ENCODE measurements at regions of chr9 and their contacts with region 1.

Region 1: GRCh38 chr9:114844766-114845165 is 38.9 kb upstream of the TNFSF15 start:
- DNase-seq: no peak
- ATAC-seq: no peak
- H3K4me3 ChIP-seq: no peak overlapping the region
- H3K4me3 Mint-ChIP-seq: no peak overlapping the region
- H3K27ac ChIP-seq: no peak overlapping the region
- H3K27ac Mint-ChIP-seq: no peak overlapping the region
- H3K4me1 ChIP-seq: no peaks in the 10 kb centered on the region
- H3K4me1 Mint-ChIP-seq: no peaks in the 10 kb centered on the region
- H3K27me3 ChIP-seq: no peaks in the 10 kb centered on the region
- H3K27me3 Mint-ChIP-seq: no peaks in the 10 kb centered on the region
- CTCF ChIP-seq: no peak

Region 2: GRCh38 chr9:114759512-114760341 is 85.0 kb before region 1 on chr9:
- CTCF ChIA-PET with region 1: no interaction called
- POLR2A ChIA-PET with region 1: no interaction called
- intact Hi-C with region 1: loop called in 1 of 2 experiments (anchors 5 kb)
- DNase-seq: no peak
- ATAC-seq: no peak
- H3K4me3 ChIP-seq: no peak overlapping the region
- H3K4me3 Mint-ChIP-seq: no peak overlapping the region
- H3K27ac ChIP-seq: no peak overlapping the region
- H3K27ac Mint-ChIP-seq: no peak overlapping the region
- H3K4me1 ChIP-seq: peaks cover 2% of the 10 kb centered on the region
- H3K4me1 Mint-ChIP-seq: peaks cover under 1% of the 10 kb centered on the region
- H3K27me3 ChIP-seq: no peaks in the 10 kb centered on the region
- H3K27me3 Mint-ChIP-seq: no peaks in the 10 kb centered on the region
- CTCF ChIP-seq: no peak

Region 3: DNA sequence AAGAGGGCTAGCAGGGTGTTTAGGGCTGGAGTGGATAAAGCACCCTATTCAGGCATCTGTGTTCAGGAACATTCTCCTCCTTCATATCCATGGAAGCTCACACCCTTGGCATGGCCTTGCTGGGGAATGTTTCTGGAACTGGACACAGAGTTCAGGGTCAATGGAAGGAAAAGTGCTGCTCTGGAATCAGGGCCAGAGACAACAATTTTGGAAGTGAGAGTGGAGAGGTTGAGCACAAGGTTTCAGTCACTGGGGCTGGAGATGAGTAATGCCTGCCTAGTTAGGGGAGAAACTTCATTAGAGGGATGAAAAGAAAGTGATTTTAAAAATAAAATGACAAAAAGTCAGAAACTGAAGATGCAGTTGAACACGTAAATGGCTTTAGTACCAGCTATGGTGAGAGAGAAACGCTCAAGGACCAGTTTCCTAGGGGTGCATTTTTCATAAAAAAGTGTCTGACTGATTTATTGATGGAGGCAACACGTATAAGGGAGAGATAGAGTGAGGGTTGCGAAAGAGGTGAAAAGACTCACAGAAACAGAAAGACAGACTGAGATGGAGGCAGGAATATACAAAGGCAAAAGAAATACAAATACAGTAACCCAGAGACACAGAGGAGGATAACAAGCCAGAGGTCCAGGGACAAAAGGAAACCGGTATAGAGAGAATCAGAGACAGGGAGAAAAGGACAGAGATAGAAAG is 30.9 kb before region 1 on chr9:
- CTCF ChIA-PET with region 1: no interaction called
- POLR2A ChIA-PET with region 1: no interaction called
- intact Hi-C with region 1: no loop called
- DNase-seq: no peak
- ATAC-seq: no peak
- H3K4me3 ChIP-seq: no peak overlapping the region
- H3K4me3 Mint-ChIP-seq: no peak overlapping the region
- H3K27ac ChIP-seq: no peak overlapping the region
- H3K27ac Mint-ChIP-seq: no peak overlapping the region
- H3K4me1 ChIP-seq: no peaks in the 10 kb centered on the region
- H3K4me1 Mint-ChIP-seq: no peaks in the 10 kb centered on the region
- H3K27me3 ChIP-seq: no peaks in the 10 kb centered on the region
- H3K27me3 Mint-ChIP-seq: no peaks in the 10 kb centered on the region
- CTCF ChIP-seq: no peak

Region 4: GRCh38 chr9:114830546-114830945 is 14.2 kb before region 1 on chr9:
- CTCF ChIA-PET with region 1: no interaction called
- POLR2A ChIA-PET with region 1: no interaction called
- intact Hi-C with region 1: no loop called
- DNase-seq: no peak
- ATAC-seq: no peak
- H3K4me3 ChIP-seq: no peak overlapping the region
- H3K4me3 Mint-ChIP-seq: no peak overlapping the region
- H3K27ac ChIP-seq: no peak overlapping the region
- H3K27ac Mint-ChIP-seq: no peak overlapping the region
- H3K4me1 ChIP-seq: no peaks in the 10 kb centered on the region
- H3K4me1 Mint-ChIP-seq: peaks cover 10% of the 10 kb centered on the region
- H3K27me3 ChIP-seq: no peaks in the 10 kb centered on the region
- H3K27me3 Mint-ChIP-seq: no peaks in the 10 kb centered on the region
- CTCF ChIP-seq: no peak

Region 5: DNA sequence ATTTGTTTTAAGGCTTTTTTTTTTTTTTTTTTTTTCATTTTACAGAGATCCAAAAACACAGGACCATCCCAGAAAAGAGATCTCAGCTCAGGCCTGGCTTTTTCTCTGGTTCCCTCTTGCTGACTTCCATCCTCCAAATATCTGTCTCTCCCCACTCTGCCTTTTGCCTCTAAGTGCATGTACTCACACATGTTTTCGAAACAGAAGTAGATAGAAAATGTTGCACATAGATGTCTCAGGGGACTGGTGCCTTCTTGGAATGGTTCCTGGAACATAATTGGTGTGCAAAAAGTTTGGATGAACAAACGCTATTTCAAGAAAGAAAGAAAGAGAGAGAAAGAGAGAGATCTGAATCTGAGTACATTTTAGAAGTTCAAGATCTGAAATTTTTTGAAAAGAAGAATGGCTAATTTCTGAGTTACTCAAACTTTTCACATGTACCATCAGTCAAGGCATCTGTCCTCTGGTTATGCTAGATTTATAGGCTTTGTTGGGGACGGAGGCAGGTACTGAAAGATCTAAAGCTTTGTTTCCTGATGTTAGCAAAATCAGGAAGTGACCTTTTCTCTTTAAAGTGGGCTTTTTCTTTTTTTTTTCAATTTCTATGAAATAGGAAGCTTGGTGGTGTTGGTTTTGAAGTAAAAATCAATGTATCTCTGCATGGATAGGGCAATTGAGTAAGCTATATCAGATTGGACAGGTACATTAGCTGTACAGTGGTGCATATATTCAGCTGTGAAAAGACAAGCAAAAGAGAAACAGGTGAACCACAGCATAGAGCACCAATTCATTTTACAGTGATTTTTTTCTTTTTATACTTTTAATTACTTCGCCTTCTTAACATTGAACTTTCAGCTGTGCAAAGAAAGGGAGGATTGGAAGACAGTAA is 94.2 kb after region 1 on chr9:
- CTCF ChIA-PET with region 1: no interaction called
- POLR2A ChIA-PET with region 1: no interaction called
- intact Hi-C with region 1: no loop called
- DNase-seq: peak in 1 of 14 experiments; percentile 38
- ATAC-seq: peak; percentile 46
- H3K4me3 ChIP-seq: no peak overlapping the region
- H3K4me3 Mint-ChIP-seq: peak overlapping the region; percentile 8
- H3K27ac ChIP-seq: no peak overlapping the region
- H3K27ac Mint-ChIP-seq: peak overlapping the region; percentile 60
- H3K4me1 ChIP-seq: peaks cover 13% of the 10 kb centered on the region
- H3K4me1 Mint-ChIP-seq: peaks cover 34% of the 10 kb centered on the region
- H3K27me3 ChIP-seq: no peaks in the 10 kb centered on the region
- H3K27me3 Mint-ChIP-seq: no peaks in the 10 kb centered on the region
- CTCF ChIP-seq: no peak

Region 6: GRCh38 chr9:116238225-116238624 is 1393.5 kb after region 1 on chr9:
- CTCF ChIA-PET with region 1: no interaction called
- POLR2A ChIA-PET with region 1: no interaction called
- intact Hi-C with region 1: no loop called
- DNase-seq: no peak
- ATAC-seq: no peak
- H3K4me3 ChIP-seq: no peak overlapping the region
- H3K4me3 Mint-ChIP-seq: no peak overlapping the region
- H3K27ac ChIP-seq: no peak overlapping the region
- H3K27ac Mint-ChIP-seq: no peak overlapping the region
- H3K4me1 ChIP-seq: no peaks in the 10 kb centered on the region
- H3K4me1 Mint-ChIP-seq: no peaks in the 10 kb centered on the region
- H3K27me3 ChIP-seq: no peaks in the 10 kb centered on the region
- H3K27me3 Mint-ChIP-seq: no peaks in the 10 kb centered on the region
- CTCF ChIP-seq: no peak

Measured in CD4-positive, alpha-beta T cell (primary cell).